PC-3 (cell line): ENCODE measurements at regions of chr7 and their contacts with region 1.

Region 1: DNA sequence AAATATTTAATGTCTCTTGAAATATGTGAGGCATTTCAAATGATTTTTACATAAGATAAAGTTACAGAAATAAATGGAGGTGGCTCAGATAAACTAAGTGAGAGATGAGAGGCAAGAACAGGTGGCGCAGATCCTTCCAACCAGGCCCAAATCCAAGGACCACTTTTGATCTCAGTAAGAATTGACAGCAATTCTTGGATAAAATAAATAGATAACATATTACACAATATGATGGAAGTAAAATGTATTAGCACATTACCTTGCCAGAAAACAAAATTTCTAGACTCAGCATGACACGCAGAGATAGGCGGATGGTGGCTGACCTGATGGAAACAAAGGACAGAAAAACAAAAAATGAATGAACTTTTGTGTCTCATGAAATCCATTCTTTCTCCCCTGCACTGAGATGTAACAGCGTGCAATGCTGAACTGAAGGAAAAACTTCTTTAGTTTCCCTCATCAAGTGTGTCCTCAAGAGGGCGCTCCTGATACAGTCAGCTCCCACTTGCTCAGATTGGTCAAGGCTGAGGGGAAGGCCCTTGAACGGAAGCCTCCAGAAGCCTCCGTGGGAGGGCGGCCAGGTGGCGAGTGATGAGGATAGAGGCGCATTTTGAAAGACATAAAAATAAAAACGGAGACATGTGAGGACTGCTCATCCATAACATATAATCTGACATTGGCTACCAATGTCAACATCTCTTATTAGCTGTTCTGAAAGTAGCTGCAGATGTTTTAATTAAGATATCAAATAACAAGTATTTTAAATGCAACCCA is 62.8 kb upstream of the GSDME start:
- DNase-seq: peak; percentile 89
- ATAC-seq: peak; percentile 57
- H3K4me3 ChIP-seq: peak overlapping the region; percentile 46
- H3K27ac ChIP-seq: peak overlapping the region; percentile 97
- H3K4me1 ChIP-seq: peaks cover 39% of the 10 kb centered on the region
- H3K27me3 ChIP-seq: no peaks in the 10 kb centered on the region
- CTCF ChIP-seq: peak; percentile 95

Region 2: DNA sequence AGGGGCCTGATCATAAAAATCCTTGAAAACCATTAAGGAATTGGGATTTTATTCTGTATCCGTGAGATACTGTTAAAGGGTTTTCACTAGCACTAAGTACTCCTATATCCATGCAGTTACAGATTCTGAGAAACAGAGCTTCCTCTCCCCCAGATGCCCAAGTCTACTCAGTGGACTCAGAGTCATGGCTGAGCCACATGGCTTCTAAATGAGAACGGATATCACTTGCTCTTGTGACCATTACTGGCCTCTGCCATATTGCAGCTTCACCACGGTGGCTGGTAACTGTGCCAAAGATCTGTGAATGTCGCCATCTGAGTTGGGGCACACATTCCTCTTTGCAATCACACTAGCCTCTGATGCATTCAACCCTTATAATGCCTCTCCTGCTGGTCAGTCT is 288.8 kb before region 1 on chr7:
- CTCF ChIA-PET with region 1: no interaction called
- POLR2A ChIA-PET with region 1: no interaction called
- intact Hi-C with region 1: no loop called
- DNase-seq: no peak
- ATAC-seq: no peak
- H3K4me3 ChIP-seq: no peak overlapping the region
- H3K27ac ChIP-seq: no peak overlapping the region
- H3K4me1 ChIP-seq: no peaks in the 10 kb centered on the region
- H3K27me3 ChIP-seq: peaks cover 63% of the 10 kb centered on the region
- CTCF ChIP-seq: no peak

Region 3: GRCh38 chr7:24786941-24787340 is 33.2 kb before region 1 on chr7:
- CTCF ChIA-PET with region 1: no interaction called
- POLR2A ChIA-PET with region 1: no interaction called
- intact Hi-C with region 1: no loop called
- DNase-seq: peak; percentile 96
- ATAC-seq: peak; percentile 99
- H3K4me3 ChIP-seq: no peak overlapping the region
- H3K27ac ChIP-seq: peak overlapping the region; percentile 82
- H3K4me1 ChIP-seq: peaks cover 13% of the 10 kb centered on the region
- H3K27me3 ChIP-seq: no peaks in the 10 kb centered on the region
- CTCF ChIP-seq: no peak

Region 4: DNA sequence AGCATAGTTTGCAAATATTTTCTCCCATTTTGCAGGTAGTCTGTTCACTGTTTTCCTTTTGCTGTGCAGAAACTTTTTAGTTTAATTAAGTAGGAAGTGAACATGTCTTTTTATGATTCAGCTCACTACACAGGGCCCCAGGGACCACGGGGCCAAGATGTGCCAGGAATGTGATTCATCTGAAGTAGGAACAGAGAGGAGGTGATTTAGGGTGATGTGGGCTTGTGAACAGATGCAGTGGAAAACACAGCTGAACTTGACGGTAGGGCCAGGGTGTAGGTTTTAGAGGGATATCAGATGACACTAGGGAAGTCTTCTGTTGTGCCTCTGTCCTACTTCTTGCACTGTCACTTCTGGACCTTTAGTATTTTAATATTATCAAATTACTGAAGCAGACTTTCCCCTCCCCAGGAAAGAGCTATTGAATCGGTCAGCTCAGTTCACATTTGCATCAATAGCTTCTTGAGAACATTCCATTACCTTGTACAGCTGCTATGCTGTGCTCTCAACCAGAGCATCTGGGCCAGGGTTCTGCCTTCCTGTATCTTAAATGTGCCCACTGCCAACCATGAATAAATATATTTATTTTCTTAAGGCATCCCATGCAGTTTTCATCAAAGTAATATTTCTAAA is 63.0 kb after region 1 on chr7:
- CTCF ChIA-PET with region 1: no interaction called
- POLR2A ChIA-PET with region 1: no interaction called
- intact Hi-C with region 1: loop called (anchors 2 kb)
- DNase-seq: peak; percentile 66
- ATAC-seq: peak; percentile 95
- H3K4me3 ChIP-seq: no peak overlapping the region
- H3K27ac ChIP-seq: no peak overlapping the region
- H3K4me1 ChIP-seq: peaks cover 16% of the 10 kb centered on the region
- H3K27me3 ChIP-seq: no peaks in the 10 kb centered on the region
- CTCF ChIP-seq: no peak

Region 5: GRCh38 chr7:24926623-24927524 is 106.8 kb after region 1 on chr7:
- CTCF ChIA-PET with region 1: no interaction called
- POLR2A ChIA-PET with region 1: no interaction called
- intact Hi-C with region 1: loop called (anchors 1 kb)
- DNase-seq: peak; percentile 8
- ATAC-seq: peak; percentile 63
- H3K4me3 ChIP-seq: no peak overlapping the region
- H3K27ac ChIP-seq: peak overlapping the region; percentile 41; the same call in 1 of the 2 replicates
- H3K4me1 ChIP-seq: peaks cover 31% of the 10 kb centered on the region
- H3K27me3 ChIP-seq: no peaks in the 10 kb centered on the region
- CTCF ChIP-seq: no peak

Region 6: DNA sequence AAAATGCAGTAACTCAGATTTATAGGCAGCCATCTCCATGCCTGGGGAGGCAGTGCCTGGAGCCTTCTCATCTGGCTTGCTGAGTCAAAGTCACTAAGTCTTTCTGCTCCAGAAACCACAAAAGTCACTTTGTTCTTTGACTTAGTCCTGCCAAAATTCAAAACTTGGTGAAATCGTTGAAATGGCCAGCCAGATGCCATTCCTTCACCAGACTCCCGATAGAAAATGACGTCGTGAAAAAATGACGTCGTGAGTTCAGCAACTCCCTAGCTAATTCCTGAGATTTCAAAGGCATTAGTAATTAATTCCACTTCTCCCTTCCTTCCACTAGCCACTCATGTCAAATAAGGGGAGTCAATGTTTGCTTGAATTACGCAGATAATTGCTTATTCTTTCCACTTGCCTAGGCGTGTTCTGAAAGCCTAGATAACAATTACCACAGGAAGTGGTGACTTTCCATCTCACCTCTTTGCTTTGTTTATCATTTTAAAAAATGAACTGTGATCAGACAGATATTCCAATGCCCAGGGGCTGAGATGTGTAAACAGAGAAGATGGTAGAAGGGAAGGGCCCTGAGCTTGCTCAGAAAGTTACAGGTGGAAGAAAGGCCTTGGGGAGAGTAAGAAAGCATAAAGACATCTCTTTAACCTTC is 208.4 kb after region 1 on chr7:
- CTCF ChIA-PET with region 1: no interaction called
- POLR2A ChIA-PET with region 1: no interaction called
- intact Hi-C with region 1: loop called (anchors 1 kb)
- DNase-seq: peak; percentile 84
- ATAC-seq: peak; percentile 57
- H3K4me3 ChIP-seq: no peak overlapping the region
- H3K27ac ChIP-seq: peak overlapping the region; percentile 26
- H3K4me1 ChIP-seq: peaks cover 47% of the 10 kb centered on the region
- H3K27me3 ChIP-seq: no peaks in the 10 kb centered on the region
- CTCF ChIP-seq: no peak

Region 7: DNA sequence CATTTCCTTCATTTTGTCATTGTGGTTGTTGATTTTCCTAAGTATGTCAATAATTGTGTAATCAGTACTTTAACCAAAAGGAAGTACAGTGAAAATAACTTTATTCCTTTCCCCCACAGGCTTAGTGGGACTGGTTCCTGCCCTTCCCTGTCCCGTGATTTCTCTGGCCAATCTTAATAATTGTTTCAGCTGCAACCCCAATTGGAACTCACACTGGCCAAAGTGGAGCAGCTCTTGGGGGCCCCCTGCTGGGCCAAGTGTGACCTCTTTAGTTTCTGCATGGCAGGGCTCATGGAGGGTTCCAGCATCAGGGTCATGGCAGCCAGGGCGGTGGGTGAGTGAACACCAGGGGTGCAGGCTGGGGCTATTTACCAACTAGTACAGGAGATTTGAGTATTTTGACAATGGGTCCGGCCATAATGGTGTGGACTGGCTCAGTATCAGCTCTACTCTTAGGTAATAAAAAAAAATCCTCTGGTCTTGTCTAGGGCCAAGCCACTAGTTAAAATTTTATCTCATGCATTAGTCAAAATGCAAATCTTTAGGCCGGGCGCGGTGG is 273.2 kb after region 1 on chr7:
- CTCF ChIA-PET with region 1: interaction called, 11 read pairs
- POLR2A ChIA-PET with region 1: interaction called, 4 read pairs
- intact Hi-C with region 1: loop called (anchors 1 kb)
- DNase-seq: peak; percentile 90
- ATAC-seq: peak; percentile 89
- H3K4me3 ChIP-seq: no peak overlapping the region
- H3K27ac ChIP-seq: no peak overlapping the region
- H3K4me1 ChIP-seq: peaks cover 4% of the 10 kb centered on the region; the same call in 1 of the 2 replicates
- H3K27me3 ChIP-seq: no peaks in the 10 kb centered on the region
- CTCF ChIP-seq: peak; percentile 91